T-cell (primary cell): ENCODE measurements at regions of chr16 and their contacts with region 1.

Region 1: GRCh38 chr16:56950881-56951771 is 10.6 kb upstream of the CETP start:
- DNase-seq: peak in 29 of 35 experiments; percentile 14 to 65 (median 35)
- ATAC-seq: peak; percentile 79 to 90 (median 82)
- H3K4me3 ChIP-seq: no peak overlapping the region
- H3K4me3 Mint-ChIP-seq: no peak overlapping the region
- H3K27ac ChIP-seq: no peak overlapping the region
- H3K27ac Mint-ChIP-seq: peak overlapping the region in 1 of 2 donors; percentile 7
- H3K4me1 ChIP-seq: peaks cover 0 to 6% of the 10 kb centered on the region in 2 experiments
- H3K4me1 Mint-ChIP-seq: peaks cover 8 to 20% (median 13%) of the 10 kb centered on the region in 3 donors
- H3K27me3 ChIP-seq: no peaks in the 10 kb centered on the region
- H3K27me3 Mint-ChIP-seq: no peaks in the 10 kb centered on the region

Region 2: GRCh38 chr16:56789360-56789759 is 161.8 kb before region 1 on chr16:
- CTCF ChIA-PET with region 1: interaction called in 1 of 2 experiments, 14 read pairs
- POLR2A ChIA-PET with region 1: no interaction called
- DNase-seq: peak in 20 of 35 experiments; percentile 2 to 39 (median 12)
- ATAC-seq: peak in 2 of 4 experiments; percentile 34 to 45
- H3K4me3 ChIP-seq: no peak overlapping the region
- H3K4me3 Mint-ChIP-seq: no peak overlapping the region
- H3K27ac ChIP-seq: no peak overlapping the region
- H3K27ac Mint-ChIP-seq: no peak overlapping the region
- H3K4me1 ChIP-seq: no peaks in the 10 kb centered on the region
- H3K4me1 Mint-ChIP-seq: peaks cover 0 to 7% (median under 1%) of the 10 kb centered on the region in 3 donors
- H3K27me3 ChIP-seq: no peaks in the 10 kb centered on the region
- H3K27me3 Mint-ChIP-seq: no peaks in the 10 kb centered on the region

Region 3: GRCh38 chr16:57132470-57132869 is 181.3 kb after region 1 on chr16:
- CTCF ChIA-PET with region 1: no interaction called
- POLR2A ChIA-PET with region 1: interaction called in 1 of 2 experiments, 12 read pairs
- DNase-seq: no peak
- ATAC-seq: no peak
- H3K4me3 ChIP-seq: peak overlapping the region in 1 of 2 donors; percentile 15
- H3K4me3 Mint-ChIP-seq: peak overlapping the region in 2 of 3 donors; percentile 21 to 62
- H3K27ac ChIP-seq: peak overlapping the region; percentile 72
- H3K27ac Mint-ChIP-seq: peak overlapping the region; percentile 94 to 99
- H3K4me1 ChIP-seq: peaks cover 47 to 99% of the 10 kb centered on the region in 2 experiments
- H3K4me1 Mint-ChIP-seq: peaks cover 80 to 86% (median 83%) of the 10 kb centered on the region in 3 donors
- H3K27me3 ChIP-seq: no peaks in the 10 kb centered on the region
- H3K27me3 Mint-ChIP-seq: no peaks in the 10 kb centered on the region